Activated naive CD4-positive, alpha-beta T cell treated with anti-CD3 and anti-CD28 coated beads for 36 hours (primary cell): ENCODE measurements at regions of chr1 and their contacts with region 1.

Region 1: GRCh38 chr1:1374929-1375662 is at the start of gene AURKAIP1:
- DNase-seq: peak; percentile 98
- H3K4me3 Mint-ChIP-seq: peak within 1 kb of the TSS; percentile 89
- H3K27ac Mint-ChIP-seq: peak within 1 kb of the TSS; percentile 90
- H3K4me1 Mint-ChIP-seq: peaks cover 25% of the 10 kb centered on the region
- H3K27me3 Mint-ChIP-seq: no peaks in the 10 kb centered on the region
- total RNA-seq, gene AURKAIP1: 108 TPM

Region 2: DNA sequence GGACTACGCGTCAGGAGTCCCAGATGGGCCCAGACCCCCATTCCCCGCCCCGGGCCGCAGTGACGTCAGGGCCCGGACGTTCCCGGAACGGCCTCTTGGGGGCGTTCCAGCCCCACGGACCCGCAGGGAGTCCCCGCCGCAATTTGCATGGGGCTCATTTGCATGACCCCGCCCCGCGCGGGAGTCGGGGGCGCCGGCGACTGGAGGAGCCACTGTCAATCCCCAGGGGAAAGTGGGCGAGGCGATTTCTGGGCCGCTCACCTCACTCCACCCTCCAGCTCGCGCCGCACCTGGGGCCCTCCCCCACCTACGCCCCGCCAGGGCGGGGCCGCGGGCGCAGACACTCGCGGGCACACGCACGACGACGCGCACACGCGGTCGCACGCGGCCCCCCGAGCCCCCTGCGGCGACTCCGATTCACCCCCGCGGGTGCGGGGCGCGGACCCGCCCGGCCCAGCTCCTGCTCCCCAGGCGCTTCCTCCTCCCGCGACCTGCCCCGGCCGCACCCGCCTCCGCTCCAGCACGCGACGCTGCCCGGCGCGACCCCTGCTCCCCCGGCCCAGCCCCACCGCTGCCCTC is 342.0 kb before region 1 on chr1:
- CTCF ChIA-PET with region 1: no interaction called
- intact Hi-C with region 1: loop called (anchors 1 kb)
- DNase-seq: peak; percentile 97
- H3K4me3 Mint-ChIP-seq: peak overlapping the region; percentile 45
- H3K27ac Mint-ChIP-seq: no peak overlapping the region
- H3K4me1 Mint-ChIP-seq: peaks cover 9% of the 10 kb centered on the region
- H3K27me3 Mint-ChIP-seq: peaks cover 9% of the 10 kb centered on the region

Region 3: DNA sequence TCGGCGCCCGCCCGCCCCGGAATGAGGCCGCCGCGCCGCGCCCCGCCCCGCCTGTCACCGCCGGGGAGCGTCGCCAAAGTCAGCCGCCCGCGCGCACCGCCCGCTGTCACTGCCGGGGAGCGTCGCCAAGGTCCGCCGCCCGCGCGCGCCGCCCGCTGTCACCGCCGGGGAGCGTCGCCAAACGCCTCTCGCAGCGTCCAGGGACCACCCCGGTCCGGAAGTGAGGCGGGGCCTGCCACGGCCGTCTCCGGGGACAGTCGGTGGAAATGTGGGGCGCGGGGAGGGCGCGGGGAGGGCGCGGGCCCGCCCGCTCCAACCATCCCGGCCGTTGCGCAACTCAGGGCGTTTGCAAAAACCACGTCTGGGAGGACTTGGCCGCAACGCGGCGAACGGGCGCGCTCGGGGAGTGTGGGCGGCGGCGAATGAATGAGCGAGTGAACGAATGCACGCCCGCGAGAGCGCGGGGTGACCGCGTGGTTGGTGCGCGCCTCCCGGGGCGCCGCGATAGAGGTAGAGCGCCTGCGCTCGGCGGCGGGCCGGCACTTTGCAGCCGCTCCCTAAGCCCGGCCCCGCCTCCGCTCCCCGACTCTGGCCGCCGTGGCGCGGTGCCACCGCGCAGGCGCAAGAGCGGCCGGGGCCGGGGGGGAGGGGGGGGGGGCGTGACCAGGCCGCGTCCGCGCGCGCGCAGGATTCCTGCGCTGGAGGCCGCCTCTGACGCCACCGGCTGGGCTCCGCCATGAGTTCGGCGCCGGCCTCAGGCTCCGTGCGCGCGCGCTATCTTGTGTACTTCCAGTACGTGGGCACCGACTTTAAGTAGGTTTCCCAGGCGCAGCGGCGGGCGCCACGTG is 67.0 kb before region 1 on chr1 and contains the starts of genes ACAP3 and PUSL1:
- CTCF ChIA-PET with region 1: interaction called, 3 read pairs
- intact Hi-C with region 1: loop called (anchors 1 kb)
- DNase-seq: peak; percentile 88
- H3K4me3 Mint-ChIP-seq: peak within 1 kb of the TSS; percentile 79
- H3K27ac Mint-ChIP-seq: peak within 1 kb of the TSS; percentile 77
- H3K4me1 Mint-ChIP-seq: peaks cover 23% of the 10 kb centered on the region
- H3K27me3 Mint-ChIP-seq: no peaks in the 10 kb centered on the region
- total RNA-seq, gene ACAP3: 24.1 to 25.3 TPM
- total RNA-seq, gene PUSL1: 17.0 to 17.6 TPM

Region 4: DNA sequence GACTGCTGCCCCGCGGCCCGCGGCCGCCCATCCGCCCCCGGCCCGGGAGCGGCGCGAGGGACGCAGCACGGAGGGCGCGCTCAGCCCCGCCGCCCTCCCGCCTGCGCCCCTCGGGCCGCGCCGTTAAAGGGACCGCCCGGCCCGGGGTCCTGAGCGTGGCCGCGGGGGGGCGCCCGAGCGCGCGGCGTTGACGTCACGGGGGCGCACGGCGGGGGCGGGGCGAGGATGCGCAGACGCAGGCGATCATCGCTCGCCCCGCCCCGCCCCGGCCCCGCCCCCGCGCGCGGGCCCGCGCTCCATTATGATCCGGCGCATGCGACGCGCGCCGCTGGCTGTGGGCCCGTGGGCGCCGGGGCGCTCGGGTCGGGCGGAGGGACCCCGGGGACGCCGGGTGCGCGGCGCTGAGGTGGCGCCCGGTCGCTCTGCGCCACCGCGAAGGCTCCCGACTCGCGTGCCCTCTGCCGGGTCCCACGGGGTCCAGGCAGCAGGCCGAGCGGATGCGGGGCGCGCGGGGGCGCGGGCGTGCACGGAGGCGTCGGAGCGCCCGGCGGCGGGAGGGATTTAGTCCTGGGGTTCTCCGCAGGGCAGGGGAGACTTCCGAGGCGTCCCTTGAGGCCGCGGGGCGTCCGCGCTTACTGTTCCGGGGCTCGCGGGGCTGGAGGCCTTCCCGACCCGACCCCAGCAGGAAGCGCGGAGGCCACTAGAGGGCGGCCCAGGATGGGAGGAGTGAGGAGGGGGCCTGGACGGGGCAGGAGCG is 25.7 kb before region 1 on chr1 and contains the start of gene DVL1:
- CTCF ChIA-PET with region 1: interaction called, 11 read pairs
- intact Hi-C with region 1: loop called (anchors 1 kb)
- DNase-seq: peak; percentile 79
- H3K4me3 Mint-ChIP-seq: peak within 1 kb of the TSS; percentile 76
- H3K27ac Mint-ChIP-seq: no peak within 1 kb of the TSS
- H3K4me1 Mint-ChIP-seq: peaks cover 28% of the 10 kb centered on the region
- H3K27me3 Mint-ChIP-seq: peaks cover 12% of the 10 kb centered on the region
- total RNA-seq, gene DVL1: 33.4 to 35.0 TPM

Region 5: DNA sequence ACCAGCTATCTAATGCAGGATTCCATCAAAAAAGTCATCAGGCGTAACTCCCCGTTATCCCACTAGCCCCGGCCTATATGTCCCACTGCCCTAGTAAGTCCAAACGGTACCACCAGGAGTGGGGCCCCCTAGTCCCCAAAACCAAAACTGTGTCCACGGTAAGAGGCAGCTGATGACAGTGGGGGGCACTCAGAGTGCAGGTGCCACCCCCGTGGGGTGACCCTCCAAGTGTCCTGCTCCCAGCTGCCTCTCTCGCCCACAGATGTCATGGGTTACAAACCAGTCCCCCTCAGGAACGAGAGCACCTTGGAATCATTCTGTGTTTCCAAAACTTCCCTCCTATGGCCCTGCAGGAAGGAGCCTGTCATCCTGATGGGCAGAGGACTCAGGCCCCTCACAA is 10.8 kb after region 1 on chr1:
- CTCF ChIA-PET with region 1: no interaction called
- intact Hi-C with region 1: no loop called
- DNase-seq: no peak
- H3K4me3 Mint-ChIP-seq: no peak overlapping the region
- H3K27ac Mint-ChIP-seq: no peak overlapping the region
- H3K4me1 Mint-ChIP-seq: no peaks in the 10 kb centered on the region
- H3K27me3 Mint-ChIP-seq: no peaks in the 10 kb centered on the region

Region 6: DNA sequence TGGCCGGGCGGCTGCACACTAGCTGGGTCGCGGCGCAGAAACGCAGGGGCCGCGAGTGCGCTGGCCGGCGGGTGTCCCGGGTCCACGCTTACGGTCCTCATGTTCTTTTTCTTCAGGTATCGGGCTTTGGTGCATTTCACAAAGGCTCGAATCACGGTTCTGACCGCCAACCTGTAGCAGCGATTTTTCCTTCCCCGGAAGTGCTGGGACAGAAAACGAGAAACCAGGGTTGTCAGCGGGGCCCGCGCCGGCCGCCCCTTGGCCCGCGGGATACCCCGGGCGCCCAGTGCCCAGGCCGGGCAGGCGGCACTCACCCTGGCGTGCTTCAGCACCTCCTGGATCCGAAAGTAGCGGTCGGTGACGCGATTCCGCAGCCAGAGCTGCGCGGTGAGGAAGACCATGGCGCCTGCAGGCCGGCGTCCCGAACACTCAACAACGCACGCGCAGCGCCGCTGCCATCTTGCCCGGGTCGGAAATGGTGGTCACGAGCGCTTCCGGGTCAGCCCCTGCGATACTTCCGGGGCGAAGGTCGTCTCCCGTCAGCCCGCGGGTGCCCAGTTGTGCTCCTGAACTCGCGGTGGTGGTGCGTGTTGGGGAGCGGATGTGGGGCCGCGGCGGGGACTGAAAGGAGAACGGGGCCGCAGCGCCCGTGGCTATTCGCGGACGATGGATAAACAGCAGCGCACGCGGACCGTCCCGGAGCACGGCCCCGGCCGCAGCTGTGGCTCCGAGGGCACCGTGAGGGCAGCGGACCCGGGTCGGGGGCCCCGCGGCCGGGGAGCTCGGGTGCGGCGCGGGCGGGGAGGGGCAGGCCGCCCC is 31.9 kb after region 1 on chr1 and contains the start of gene MRPL20:
- CTCF ChIA-PET with region 1: interaction called, 4 read pairs
- intact Hi-C with region 1: loop called (anchors 1 kb)
- DNase-seq: peak; percentile 97
- H3K4me3 Mint-ChIP-seq: peak within 1 kb of the TSS; percentile 91
- H3K27ac Mint-ChIP-seq: peak within 1 kb of the TSS; percentile 90
- H3K4me1 Mint-ChIP-seq: peaks cover 60% of the 10 kb centered on the region
- H3K27me3 Mint-ChIP-seq: no peaks in the 10 kb centered on the region
- total RNA-seq, gene MRPL20: 103 to 107 TPM

Region 7: GRCh38 chr1:1574721-1575537 is 199.8 kb after region 1 on chr1 and contains the start of gene SSU72:
- CTCF ChIA-PET with region 1: no interaction called
- intact Hi-C with region 1: loop called (anchors 1 kb)
- DNase-seq: peak; percentile 94
- H3K4me3 Mint-ChIP-seq: peak within 1 kb of the TSS; percentile 98
- H3K27ac Mint-ChIP-seq: peak within 1 kb of the TSS; percentile 97
- H3K4me1 Mint-ChIP-seq: peaks cover 42% of the 10 kb centered on the region
- H3K27me3 Mint-ChIP-seq: no peaks in the 10 kb centered on the region
- total RNA-seq, gene SSU72: 91.6 to 95.9 TPM